ENCODE measurements at regions of chr19 and their contacts with region 1.

Region 1: GRCh38 chr19:11130824-11131455 is 24.6 kb downstream of the SPC24 start:
- DNase-seq: no peak
- H3K4me3 ChIP-seq: no peak overlapping the region
- H3K27ac ChIP-seq: peak overlapping the region; percentile 61
- H3K4me1 ChIP-seq: peaks cover 4% of the 10 kb centered on the region
- H3K27me3 ChIP-seq: no peaks in the 10 kb centered on the region
- CTCF ChIP-seq: peak; percentile 59 to 87 (median 76)
- POLR2A ChIP-seq: no peak

Region 2: DNA sequence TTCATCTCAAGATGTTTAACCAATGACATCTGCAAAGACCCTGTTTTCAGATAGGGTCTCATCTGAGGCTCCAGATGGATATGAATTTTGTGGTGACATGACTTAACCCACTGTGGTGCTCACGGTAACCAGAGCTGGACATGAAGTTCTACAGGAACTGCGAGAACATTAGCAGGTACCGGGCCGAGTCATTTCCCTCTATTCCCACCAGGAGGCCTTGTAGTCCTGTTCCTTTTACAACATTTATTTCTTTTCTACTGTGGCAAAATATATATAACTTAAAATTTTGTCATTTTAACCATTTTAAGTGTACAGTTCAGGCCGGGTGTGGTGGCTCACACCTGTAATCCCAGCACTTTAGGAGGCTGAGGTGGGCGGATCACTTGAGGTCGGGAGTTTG is 157.4 kb after region 1 on chr19:
- intact Hi-C with region 1: loop called (anchors 5 kb)
- DNase-seq: no peak
- H3K4me3 ChIP-seq: no peak overlapping the region
- H3K27ac ChIP-seq: no peak overlapping the region
- H3K4me1 ChIP-seq: peaks cover 3% of the 10 kb centered on the region
- H3K27me3 ChIP-seq: no peaks in the 10 kb centered on the region
- CTCF ChIP-seq: peak in 1 of 3 experiments; percentile 6
- POLR2A ChIP-seq: no peak